ENCODE measurements at regions of chr6 and their contacts with region 1.

Region 1: GRCh38 chr6:117317261-117317660 is 51.9 kb downstream of the VGLL2 start:
- DNase-seq: no peak

Region 2: GRCh38 chr6:116741571-116741970 is 575.7 kb before region 1 on chr6:
- intact Hi-C with region 1: no loop called
- DNase-seq: no peak

Region 3: DNA sequence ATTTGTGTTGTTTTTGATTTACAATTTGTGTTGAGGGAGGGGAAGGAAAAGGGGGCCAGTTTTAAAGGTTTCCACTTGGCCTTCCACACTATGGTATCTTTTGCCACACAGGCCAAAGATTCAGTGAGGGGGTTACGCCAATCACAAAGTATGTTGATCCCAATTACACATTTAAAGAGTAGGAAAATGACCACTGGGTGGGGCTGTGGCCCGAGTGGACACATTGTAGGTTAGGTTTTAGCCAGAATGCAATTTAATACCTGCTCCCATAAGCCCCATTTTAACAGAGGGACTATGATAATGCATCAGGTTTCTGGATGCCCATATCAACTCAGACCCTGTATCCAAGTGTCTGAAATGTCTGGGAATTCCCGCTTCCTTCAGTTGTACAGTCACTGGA is 36.3 kb before region 1 on chr6:
- intact Hi-C with region 1: loop called (anchors 2 kb)
- DNase-seq: no peak

Region 4: GRCh38 chr6:117399924-117400323 is 82.7 kb after region 1 on chr6:
- intact Hi-C with region 1: no loop called
- DNase-seq: no peak

Measured in cardiac septum (tissue), 1 donor.